Activated naive CD4-positive, alpha-beta T cell treated with anti-CD3 and anti-CD28 coated beads for 36 hours (primary cell): ENCODE measurements at regions of chr2 and their contacts with region 1.

Region 1: DNA sequence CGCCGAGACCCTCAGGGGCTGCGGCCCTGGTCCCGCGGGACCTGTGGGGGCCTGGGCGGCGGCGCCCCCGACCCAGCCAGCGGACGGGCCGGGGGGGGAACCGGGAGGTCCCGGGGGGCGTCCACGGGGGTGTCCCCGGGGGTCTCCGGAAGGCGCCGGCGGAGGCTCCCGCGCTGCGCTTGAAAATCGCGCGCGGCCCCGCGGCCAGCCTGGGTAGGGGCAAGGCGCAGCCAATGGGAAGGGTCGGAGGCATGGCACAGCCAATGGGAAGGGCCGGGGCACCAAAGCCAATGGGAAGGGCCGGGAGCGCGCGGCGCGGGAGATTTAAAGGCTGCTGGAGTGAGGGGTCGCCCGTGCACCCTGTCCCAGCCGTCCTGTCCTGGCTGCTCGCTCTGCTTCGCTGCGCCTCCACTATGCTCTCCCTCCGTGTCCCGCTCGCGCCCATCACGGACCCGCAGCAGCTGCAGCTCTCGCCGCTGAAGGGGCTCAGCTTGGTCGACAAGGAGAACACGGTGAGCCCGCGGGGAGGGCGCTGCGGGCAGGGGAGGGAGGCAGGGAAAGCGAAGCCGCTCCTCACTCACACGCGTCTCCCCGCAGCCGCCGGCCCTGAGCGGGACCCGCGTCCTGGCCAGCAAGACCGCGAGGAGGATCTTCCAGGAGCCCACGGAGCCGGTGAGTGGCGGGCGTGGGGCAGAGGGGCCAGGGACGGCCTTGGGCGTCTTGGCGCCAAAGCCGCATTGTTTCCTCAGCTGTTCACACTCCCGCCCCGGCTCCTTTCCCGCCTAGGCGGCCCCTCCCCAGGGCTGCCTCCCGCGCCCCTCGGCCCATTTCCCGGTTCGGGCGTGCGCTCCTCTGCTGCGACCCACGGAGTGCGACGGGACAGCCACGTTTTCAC is at the start of gene RRM2:
- DNase-seq: peak; percentile 98
- H3K4me3 Mint-ChIP-seq: peak within 1 kb of the TSS; percentile 99
- H3K27ac Mint-ChIP-seq: peak within 1 kb of the TSS; percentile 99
- H3K4me1 Mint-ChIP-seq: peaks cover 27% of the 10 kb centered on the region
- H3K27me3 Mint-ChIP-seq: no peaks in the 10 kb centered on the region
- total RNA-seq, gene RRM2: 466 to 514 TPM

Region 2: GRCh38 chr2:9423100-9423921 is 699.3 kb before region 1 on chr2 and contains the starts of genes CPSF3 and ITGB1BP1:
- CTCF ChIA-PET with region 1: no interaction called
- intact Hi-C with region 1: loop called (anchors 2 kb)
- DNase-seq: peak; percentile 97
- H3K4me3 Mint-ChIP-seq: no peak within 1 kb of the TSS
- H3K27ac Mint-ChIP-seq: peak within 1 kb of the TSS; percentile 92
- H3K4me1 Mint-ChIP-seq: peaks cover 39% of the 10 kb centered on the region
- H3K27me3 Mint-ChIP-seq: no peaks in the 10 kb centered on the region
- total RNA-seq, gene CPSF3: 64.5 to 65.7 TPM
- total RNA-seq, gene ITGB1BP1: 97.2 to 97.4 TPM

Region 3: DNA sequence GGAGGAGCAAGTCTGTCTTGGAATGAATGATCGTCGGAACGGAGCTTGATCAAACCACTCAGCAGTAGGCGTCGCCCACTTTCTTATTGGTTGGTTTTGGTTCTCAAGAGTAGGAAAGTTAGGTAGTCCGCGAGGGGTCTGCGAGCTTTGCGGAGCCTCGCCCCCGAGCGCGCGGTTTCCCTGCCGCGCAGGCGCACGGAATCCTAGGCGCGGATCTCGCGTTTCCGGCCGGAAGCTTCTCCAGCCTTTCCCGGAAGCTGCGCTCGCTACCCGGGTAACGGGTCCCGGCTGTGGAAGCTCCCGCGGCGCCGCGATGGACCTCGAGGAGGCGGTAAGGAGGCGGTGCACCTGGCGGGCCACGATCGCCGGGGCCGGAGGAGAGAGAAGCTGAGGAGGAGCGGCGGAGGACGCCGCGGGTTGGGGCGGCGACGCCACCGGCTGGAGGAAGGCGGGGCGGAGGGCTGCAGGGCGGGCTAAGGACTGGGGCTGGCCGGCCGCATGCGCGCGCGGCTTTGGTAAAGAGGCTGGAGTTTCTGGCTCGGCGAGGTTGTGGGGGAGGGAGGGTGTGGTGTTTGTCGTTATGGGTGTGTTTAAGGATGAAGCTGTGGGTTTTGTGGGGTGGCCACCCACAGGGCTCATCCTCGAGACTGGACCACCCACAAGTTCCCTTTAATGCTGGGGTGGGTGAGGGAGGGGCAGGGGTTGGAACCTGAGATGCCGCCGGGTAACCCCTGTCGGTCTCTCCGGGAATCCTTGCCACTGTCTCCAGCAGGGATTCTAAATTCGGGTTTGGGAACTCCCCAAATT is 279.2 kb before region 1 on chr2 and contains the start of gene TAF1B:
- CTCF ChIA-PET with region 1: no interaction called
- intact Hi-C with region 1: loop called (anchors 2 kb)
- DNase-seq: peak; percentile 89
- H3K4me3 Mint-ChIP-seq: peak within 1 kb of the TSS; percentile 93
- H3K27ac Mint-ChIP-seq: peak within 1 kb of the TSS; percentile 88
- H3K4me1 Mint-ChIP-seq: peaks cover 35% of the 10 kb centered on the region
- H3K27me3 Mint-ChIP-seq: no peaks in the 10 kb centered on the region
- total RNA-seq, gene TAF1B: 24.8 to 25.7 TPM

Region 4: DNA sequence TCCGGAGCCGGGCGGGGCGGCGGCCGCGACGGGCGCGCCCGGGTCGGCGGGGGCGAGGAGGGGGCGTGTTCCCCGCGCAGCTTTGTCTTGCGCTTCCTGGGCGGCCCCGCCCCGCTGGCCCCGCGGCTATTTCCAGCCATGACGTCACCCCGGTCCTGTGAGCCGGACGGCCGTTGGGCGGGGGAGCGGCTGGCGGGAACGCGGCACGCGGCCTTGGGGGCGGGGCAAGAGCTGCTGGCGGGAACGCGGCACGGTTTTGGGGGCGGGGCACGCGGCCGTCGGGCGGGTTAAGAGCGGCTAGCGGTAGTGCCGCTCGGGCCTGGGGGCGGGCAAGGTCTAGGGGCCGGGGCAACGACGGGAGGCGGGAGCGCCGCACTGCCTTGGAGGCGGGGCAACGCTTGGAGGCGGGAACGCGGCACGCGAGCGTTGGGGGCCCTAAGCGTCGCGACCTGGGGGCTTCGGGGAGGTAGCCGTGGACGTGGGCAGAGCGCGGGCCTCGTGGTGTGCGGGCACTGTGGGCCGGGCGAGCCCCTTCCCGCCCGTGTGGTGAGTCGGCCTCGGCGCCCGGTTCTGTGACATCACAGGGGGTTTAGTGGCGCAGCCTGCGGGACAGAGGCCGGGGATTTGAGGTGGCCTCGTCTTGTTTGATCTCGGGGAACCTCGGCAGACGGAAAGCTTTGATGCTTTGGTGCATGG is 78.6 kb before region 1 on chr2:
- CTCF ChIA-PET with region 1: no interaction called
- intact Hi-C with region 1: loop called (anchors 1 kb)
- DNase-seq: peak; percentile 87
- H3K4me3 Mint-ChIP-seq: peak overlapping the region; percentile 59
- H3K27ac Mint-ChIP-seq: peak overlapping the region; percentile 33
- H3K4me1 Mint-ChIP-seq: peaks cover 15% of the 10 kb centered on the region
- H3K27me3 Mint-ChIP-seq: peaks cover 3% of the 10 kb centered on the region

Region 5: DNA sequence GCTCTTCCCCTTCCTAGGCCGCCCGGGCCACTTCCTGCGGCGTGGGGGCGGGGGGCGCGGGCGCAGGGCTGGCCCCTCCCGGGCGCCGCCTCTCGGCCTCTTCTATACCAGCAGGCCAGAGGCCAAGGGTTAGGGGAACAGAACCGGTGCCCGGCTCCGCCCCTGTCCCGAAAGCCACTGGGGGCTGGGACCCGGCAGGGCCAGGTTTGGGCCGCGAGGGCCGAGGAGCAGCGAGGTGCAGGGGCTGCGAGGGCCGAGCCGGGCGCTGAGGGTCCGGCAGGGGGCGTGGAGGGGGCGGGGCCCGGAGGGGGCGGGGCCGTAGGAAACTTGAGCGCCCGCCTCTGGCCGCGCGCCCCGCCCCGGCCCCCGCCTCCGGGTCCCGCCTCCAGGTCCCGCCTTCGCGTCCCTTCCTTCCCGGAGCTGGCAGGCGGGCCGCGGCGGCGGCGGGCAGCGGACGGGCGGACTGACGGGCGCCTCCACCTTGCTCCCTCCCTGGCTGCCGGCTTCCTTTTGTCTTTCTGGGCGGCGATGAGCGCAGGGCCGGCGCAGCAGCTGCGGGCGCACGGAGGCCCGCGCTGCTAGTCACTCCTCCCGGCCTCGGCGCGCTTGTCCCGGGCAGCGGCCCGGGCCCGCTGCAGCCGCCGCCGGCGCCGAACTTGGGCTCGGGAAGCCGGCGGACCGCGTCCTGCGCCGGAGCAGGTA is 180.0 kb after region 1 on chr2 and contains the start of gene HPCAL1:
- CTCF ChIA-PET with region 1: interaction called, 3 read pairs
- intact Hi-C with region 1: loop called (anchors 1 kb)
- DNase-seq: peak; percentile 84
- H3K4me3 Mint-ChIP-seq: peak within 1 kb of the TSS; percentile 99
- H3K27ac Mint-ChIP-seq: peak within 1 kb of the TSS; percentile 83
- H3K4me1 Mint-ChIP-seq: peaks cover 71% of the 10 kb centered on the region
- H3K27me3 Mint-ChIP-seq: no peaks in the 10 kb centered on the region
- total RNA-seq, gene HPCAL1: 71.4 to 73.8 TPM

Region 6: DNA sequence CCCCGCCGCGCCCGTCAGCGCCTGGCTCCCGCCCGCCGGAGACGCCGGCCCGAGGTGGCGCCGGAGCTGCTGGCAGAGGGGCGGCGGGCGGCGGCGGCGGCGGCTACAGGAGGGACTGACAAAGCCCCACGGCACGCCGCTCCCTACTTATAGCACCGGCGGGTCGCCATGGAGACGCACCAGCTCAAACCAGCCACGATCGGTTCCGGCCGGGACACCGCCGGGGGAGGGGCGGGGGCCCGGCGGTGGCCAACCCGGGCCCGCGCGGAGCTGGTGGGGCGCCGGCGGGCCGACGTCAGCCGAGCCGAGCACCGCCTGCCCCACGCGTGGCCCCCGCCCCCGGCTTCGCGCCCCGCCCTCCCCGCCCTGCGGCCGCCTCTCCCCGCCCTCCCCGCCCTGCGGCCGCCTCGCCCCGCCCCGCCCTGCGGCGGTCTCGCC is 325.6 kb after region 1 on chr2 and contains the start of gene ODC1:
- CTCF ChIA-PET with region 1: interaction called, 3 read pairs
- intact Hi-C with region 1: loop called (anchors 1 kb)
- DNase-seq: peak; percentile 89
- H3K4me3 Mint-ChIP-seq: peak within 1 kb of the TSS; percentile 85
- H3K27ac Mint-ChIP-seq: peak within 1 kb of the TSS; percentile 91
- H3K4me1 Mint-ChIP-seq: peaks cover 56% of the 10 kb centered on the region
- H3K27me3 Mint-ChIP-seq: no peaks in the 10 kb centered on the region
- total RNA-seq, gene ODC1: 174 to 177 TPM

Region 7: GRCh38 chr2:10812362-10813162 is 689.9 kb after region 1 on chr2 and contains the start of gene PDIA6:
- CTCF ChIA-PET with region 1: no interaction called
- intact Hi-C with region 1: loop called (anchors 5 kb)
- DNase-seq: peak; percentile 96
- H3K4me3 Mint-ChIP-seq: peak within 1 kb of the TSS; percentile 85
- H3K27ac Mint-ChIP-seq: peak within 1 kb of the TSS; percentile 85
- H3K4me1 Mint-ChIP-seq: peaks cover 34% of the 10 kb centered on the region
- H3K27me3 Mint-ChIP-seq: no peaks in the 10 kb centered on the region
- total RNA-seq, gene PDIA6: 103 to 106 TPM